Motor neuron (in vitro differentiated cells): ENCODE measurements at regions of chr10 and their contacts with region 1.

Region 1: GRCh38 chr10:76282061-76283035 is 850.9 kb downstream of the LRMDA start:
- ATAC-seq: peak in 6 of 8 experiments; percentile 83 to 99 (median 99)
- H3K4me3 ChIP-seq: no peak overlapping the region
- H3K27ac ChIP-seq: peak overlapping the region; percentile 20 to 65
- H3K4me1 ChIP-seq: peaks cover 23 to 24% of the 10 kb centered on the region in 2 donors

Region 2: GRCh38 chr10:76113959-76114358 is 168.4 kb before region 1 on chr10:
- in situ Hi-C with region 1: loop called in 1 of 9 experiments (anchors 25 kb)
- ATAC-seq: peak in 1 of 8 experiments; percentile 33
- H3K4me3 ChIP-seq: no peak overlapping the region
- H3K27ac ChIP-seq: no peak overlapping the region
- H3K4me1 ChIP-seq: peaks cover 31 to 38% of the 10 kb centered on the region in 2 donors